WTC11 (cell line): ENCODE measurements at regions of chr17 and their contacts with region 1.

Region 1: GRCh38 chr17:47850692-47851573 is at the start of gene SP6:
- DNase-seq: peak; percentile 90
- ATAC-seq: peak; percentile 67
- H3K4me3 Mint-ChIP-seq: peak within 1 kb of the TSS; percentile 78
- H3K27ac Mint-ChIP-seq: no peak within 1 kb of the TSS
- H3K4me1 Mint-ChIP-seq: peaks cover 46% of the 10 kb centered on the region
- H3K27me3 Mint-ChIP-seq: peaks cover 92% of the 10 kb centered on the region
- CTCF ChIP-seq: no peak
- total RNA-seq, gene SP6: 2.0 to 3.3 TPM (median 2.3 TPM) in 3 replicates

Region 2: GRCh38 chr17:47763913-47764582 is 86.9 kb before region 1 on chr17:
- CTCF ChIA-PET with region 1: no interaction called
- POLR2A ChIA-PET with region 1: no interaction called
- DNase-seq: no peak
- ATAC-seq: no peak
- H3K4me3 Mint-ChIP-seq: no peak overlapping the region
- H3K27ac Mint-ChIP-seq: no peak overlapping the region
- H3K4me1 Mint-ChIP-seq: no peaks in the 10 kb centered on the region
- H3K27me3 Mint-ChIP-seq: peaks cover 39% of the 10 kb centered on the region
- CTCF ChIP-seq: no peak

Region 3: GRCh38 chr17:47831003-47831933 is 19.7 kb before region 1 on chr17 and contains the starts of genes LRRC46 and MRPL10:
- CTCF ChIA-PET with region 1: interaction called, 32 read pairs
- POLR2A ChIA-PET with region 1: interaction called, 4 read pairs
- DNase-seq: peak; percentile 93
- ATAC-seq: peak; percentile 98
- H3K4me3 Mint-ChIP-seq: peak within 1 kb of the TSS; percentile 98
- H3K27ac Mint-ChIP-seq: peak within 1 kb of the TSS; percentile 93
- H3K4me1 Mint-ChIP-seq: peaks cover 12% of the 10 kb centered on the region
- H3K27me3 Mint-ChIP-seq: no peaks in the 10 kb centered on the region
- CTCF ChIP-seq: no peak
- total RNA-seq, gene LRRC46: 0.09 to 0.39 TPM (median 0.30 TPM) in 3 replicates
- total RNA-seq, gene MRPL10: 80.1 to 87.0 TPM (median 85.3 TPM) in 3 replicates

Region 4: GRCh38 chr17:47882247-47882646 is 31.3 kb after region 1 on chr17:
- CTCF ChIA-PET with region 1: interaction called, 1,122 read pairs
- POLR2A ChIA-PET with region 1: interaction called, 12 read pairs
- DNase-seq: no peak
- ATAC-seq: no peak
- H3K4me3 Mint-ChIP-seq: no peak overlapping the region
- H3K27ac Mint-ChIP-seq: no peak overlapping the region
- H3K4me1 Mint-ChIP-seq: peaks cover 32% of the 10 kb centered on the region
- H3K27me3 Mint-ChIP-seq: peaks cover 14% of the 10 kb centered on the region
- CTCF ChIP-seq: no peak

Region 5: GRCh38 chr17:47929218-47930000 is 78.5 kb after region 1 on chr17:
- CTCF ChIA-PET with region 1: interaction called, 14 read pairs
- POLR2A ChIA-PET with region 1: no interaction called
- DNase-seq: no peak
- ATAC-seq: no peak
- H3K4me3 Mint-ChIP-seq: no peak overlapping the region
- H3K27ac Mint-ChIP-seq: no peak overlapping the region
- H3K4me1 Mint-ChIP-seq: no peaks in the 10 kb centered on the region
- H3K27me3 Mint-ChIP-seq: no peaks in the 10 kb centered on the region
- CTCF ChIP-seq: no peak

Region 6: GRCh38 chr17:47957591-47958428 is 106.9 kb after region 1 on chr17 and contains the start of gene PRR15L:
- CTCF ChIA-PET with region 1: interaction called, 12 read pairs
- POLR2A ChIA-PET with region 1: no interaction called
- DNase-seq: peak; percentile 66
- ATAC-seq: peak; percentile 80
- H3K4me3 Mint-ChIP-seq: peak within 1 kb of the TSS; percentile 45
- H3K27ac Mint-ChIP-seq: peak within 1 kb of the TSS; percentile 70
- H3K4me1 Mint-ChIP-seq: peaks cover 29% of the 10 kb centered on the region
- H3K27me3 Mint-ChIP-seq: peaks cover 15% of the 10 kb centered on the region
- CTCF ChIP-seq: no peak
- total RNA-seq, gene PRR15L: 0.59 to 1.1 TPM (median 1.1 TPM) in 3 replicates